A673 (cell line): ENCODE measurements at regions of chr2 and their contacts with region 1.

Region 1: DNA sequence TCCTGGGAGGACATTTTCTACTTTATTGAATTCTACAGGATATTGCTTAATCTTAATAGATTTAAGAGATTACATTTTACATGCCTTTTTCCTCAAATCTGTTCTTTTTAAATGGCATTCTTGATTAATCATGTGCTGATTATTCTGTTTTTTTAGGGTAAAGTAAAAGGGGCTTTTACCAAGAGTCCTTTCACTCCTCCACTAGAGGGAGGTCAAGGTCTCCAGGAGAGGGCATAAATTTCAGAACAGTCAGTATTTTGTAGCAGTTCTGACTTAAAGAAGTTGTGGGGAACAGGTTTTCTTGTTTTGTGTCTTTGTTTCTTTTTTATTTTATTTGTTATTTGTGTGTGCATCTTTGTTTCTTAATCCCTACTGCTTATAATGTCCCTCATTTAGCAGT is 25.4 kb downstream of the WDR75 start:
- DNase-seq: peak; percentile 53
- H3K4me3 ChIP-seq: no peak overlapping the region
- H3K27ac ChIP-seq: no peak overlapping the region
- H3K4me1 ChIP-seq: no peaks in the 10 kb centered on the region
- H3K27me3 ChIP-seq: no peaks in the 10 kb centered on the region
- CTCF ChIP-seq: peak; percentile 65

Region 2: GRCh38 chr2:189633392-189633811 is 166.7 kb after region 1 on chr2:
- CTCF ChIA-PET with region 1: no interaction called
- POLR2A ChIA-PET with region 1: no interaction called
- intact Hi-C with region 1: loop called (anchors 5 kb)
- DNase-seq: peak; percentile 12
- H3K4me3 ChIP-seq: no peak overlapping the region
- H3K27ac ChIP-seq: no peak overlapping the region
- H3K4me1 ChIP-seq: no peaks in the 10 kb centered on the region
- H3K27me3 ChIP-seq: no peaks in the 10 kb centered on the region
- CTCF ChIP-seq: peak; percentile 57